GM18951 (cell line): ENCODE measurements at regions of chr19 and their contacts with region 1.

Region 1: DNA sequence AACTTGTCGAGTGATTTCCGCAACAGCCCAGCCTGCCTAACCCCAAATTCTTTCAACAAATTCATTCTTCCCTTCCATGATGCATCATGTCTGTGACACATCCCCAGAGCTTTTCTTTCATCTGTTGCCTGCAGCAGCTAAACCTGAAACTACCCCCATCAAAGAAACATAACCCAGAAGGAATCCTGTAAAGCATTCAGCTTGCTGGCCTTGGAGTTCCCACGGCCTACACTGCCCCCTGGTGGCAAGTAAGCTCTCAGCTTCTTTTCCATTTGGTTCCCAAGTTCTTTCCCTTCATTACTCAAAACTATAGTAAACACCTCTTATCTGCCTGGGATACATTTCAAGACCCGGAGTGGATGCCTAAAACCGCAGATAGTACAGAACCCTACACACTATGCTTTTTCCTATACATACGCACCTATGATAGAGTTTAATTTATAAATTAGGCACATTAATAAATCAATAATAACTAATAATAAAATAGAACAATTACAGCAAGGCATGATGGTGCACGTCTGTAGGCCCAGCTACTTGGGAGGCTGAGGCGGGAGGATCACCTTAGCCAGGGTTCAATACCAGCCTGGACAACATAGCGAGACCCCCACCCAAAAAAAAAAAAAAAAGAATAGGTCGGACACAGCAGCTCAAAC is 7.4 kb downstream of the ETHE1 start:
- POLR2A ChIP-seq: no peak

Region 2: DNA sequence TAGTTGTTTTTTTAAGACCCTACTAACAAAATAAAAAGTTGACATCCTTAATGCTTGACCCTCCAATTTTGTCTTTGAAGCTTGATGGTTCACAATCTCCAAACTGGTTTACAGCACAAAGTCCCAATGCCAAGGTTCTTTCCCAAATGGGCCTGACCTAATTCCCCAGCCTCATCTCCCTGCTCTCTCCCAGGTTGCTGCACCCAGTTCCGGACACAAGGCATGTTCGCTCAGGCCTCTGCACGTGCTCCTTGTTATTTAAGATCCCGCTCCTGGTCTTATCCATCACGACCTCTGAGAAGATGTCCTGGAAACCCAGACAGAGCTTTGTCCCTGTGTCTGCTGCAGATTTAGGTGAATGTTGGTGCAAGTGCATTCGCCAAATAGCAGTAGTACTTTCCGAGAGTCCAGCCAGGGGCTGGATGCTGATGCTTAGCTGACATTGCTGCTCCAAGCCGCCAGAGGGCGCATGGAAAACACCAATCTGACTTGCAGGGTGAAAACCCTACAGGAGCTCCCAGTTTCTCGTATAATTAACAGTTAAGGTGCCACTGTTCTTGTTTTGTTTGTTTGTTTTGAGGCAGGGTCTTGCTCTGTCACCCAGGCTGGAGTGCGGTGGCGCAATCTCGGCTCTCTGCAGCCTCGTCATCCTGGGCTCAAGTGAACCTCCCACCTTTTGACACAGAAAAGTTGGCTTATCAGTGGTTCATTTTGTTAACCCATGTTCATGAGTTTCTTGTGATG is 72.6 kb before region 1 on chr19:
- in situ Hi-C with region 1: loop called (anchors 5 kb)
- POLR2A ChIP-seq: no peak